Breast epithelium (tissue), 4 donors: ENCODE measurements at regions of chr2 and their contacts with region 1.

Region 1: GRCh38 chr2:79910643-79911042 is 393.9 kb downstream of the LRRTM1 start:
- DNase-seq: no peak
- H3K4me3 ChIP-seq: no peak overlapping the region
- H3K27ac ChIP-seq: no peak overlapping the region
- H3K4me1 ChIP-seq: no peaks in the 10 kb centered on the region
- H3K27me3 ChIP-seq: no peaks in the 10 kb centered on the region
- CTCF ChIP-seq: no peak
- POLR2A ChIP-seq: no peak

Region 2: GRCh38 chr2:79960519-79960918 is 49.9 kb after region 1 on chr2:
- intact Hi-C with region 1: no loop called
- DNase-seq: no peak
- H3K4me3 ChIP-seq: no peak overlapping the region
- H3K27ac ChIP-seq: no peak overlapping the region
- H3K4me1 ChIP-seq: no peaks in the 10 kb centered on the region
- H3K27me3 ChIP-seq: no peaks in the 10 kb centered on the region
- CTCF ChIP-seq: no peak
- POLR2A ChIP-seq: no peak

Region 3: DNA sequence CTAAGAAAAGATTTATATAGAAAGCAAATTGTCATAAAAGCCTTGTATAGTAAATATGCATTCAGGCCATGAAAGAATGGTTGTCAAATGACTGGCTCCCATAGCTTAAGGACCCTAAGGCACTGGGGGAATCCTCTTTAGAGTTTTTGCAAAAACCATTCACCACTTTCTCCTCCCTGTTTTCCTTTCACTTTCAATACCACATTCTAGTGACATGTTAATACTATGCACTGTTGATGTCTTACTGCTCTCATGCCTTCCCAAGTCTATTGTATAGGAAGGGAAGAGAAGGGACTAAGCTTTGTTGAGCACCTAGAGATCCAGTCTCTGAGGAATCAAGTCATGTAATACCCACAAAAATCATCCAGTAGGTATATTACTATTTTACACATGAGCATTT is 776.9 kb after region 1 on chr2:
- intact Hi-C with region 1: loop called (anchors 10 kb)
- DNase-seq: no peak
- H3K4me3 ChIP-seq: no peak overlapping the region
- H3K27ac ChIP-seq: no peak overlapping the region
- H3K4me1 ChIP-seq: no peaks in the 10 kb centered on the region
- H3K27me3 ChIP-seq: no peaks in the 10 kb centered on the region
- CTCF ChIP-seq: no peak
- POLR2A ChIP-seq: no peak